Mammary epithelial cell (primary cell): ENCODE measurements at regions of chr2 and their contacts with region 1.

Region 1: GRCh38 chr2:71130113-71130904 is at the starts of genes MCEE and MPHOSPH10:
- DNase-seq: peak; percentile 92
- H3K4me3 ChIP-seq: peak within 1 kb of the TSS; percentile 91 to 98 (median 91)
- H3K27ac ChIP-seq: peak within 1 kb of the TSS; percentile 71
- H3K4me1 ChIP-seq: peaks cover 4% of the 10 kb centered on the region
- H3K27me3 ChIP-seq: no peaks in the 10 kb centered on the region
- CTCF ChIP-seq: no peak
- total RNA-seq, gene MCEE: 7.0 to 9.3 TPM
- total RNA-seq, gene MPHOSPH10: 10.5 to 28.1 TPM

Region 2: DNA sequence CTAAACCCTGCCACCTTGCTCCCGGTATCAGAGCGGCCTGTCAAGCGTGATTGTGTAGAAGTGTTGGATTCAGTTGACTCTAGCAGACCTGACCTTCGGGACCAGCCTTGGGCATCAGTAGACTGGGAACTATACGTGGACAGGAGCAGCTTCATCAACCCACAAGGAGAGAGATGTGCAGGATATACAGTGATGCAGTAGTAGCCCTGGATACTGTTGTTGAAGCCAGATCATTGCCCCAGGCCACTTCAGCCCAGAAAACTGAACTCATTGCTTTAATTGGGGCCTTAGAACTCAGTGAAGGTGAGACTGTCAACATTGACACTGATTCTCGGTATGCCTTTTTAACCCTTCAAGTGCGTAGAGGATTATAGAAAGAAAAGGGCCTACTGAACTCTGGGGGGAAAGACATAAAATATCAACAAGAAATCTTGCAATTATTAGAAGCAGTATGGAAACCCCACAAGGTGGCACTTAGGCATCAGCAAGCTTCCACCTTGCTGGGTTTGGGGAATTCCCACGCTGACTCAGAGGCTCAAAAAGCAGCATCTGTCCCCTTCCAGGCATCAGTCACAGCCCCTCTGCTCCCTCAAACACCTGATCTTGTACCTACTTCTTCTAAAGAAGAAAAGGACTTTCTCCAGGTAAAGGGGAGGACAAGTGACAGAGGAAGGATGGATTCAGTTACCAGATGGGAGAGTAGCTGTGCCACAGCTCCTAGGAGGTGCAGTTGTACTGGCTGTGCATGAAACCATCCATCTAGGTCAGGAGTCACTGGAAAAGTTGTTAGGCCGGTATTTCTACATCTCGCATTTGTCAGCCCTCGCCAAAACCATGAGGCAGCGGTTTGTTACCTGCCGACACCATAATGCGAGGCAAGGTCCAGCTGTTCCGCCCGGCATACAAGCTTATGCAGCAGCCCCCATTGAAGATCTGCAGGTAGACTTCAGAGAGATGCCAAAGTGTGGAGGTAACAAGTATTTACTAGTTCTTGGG is 80.6 kb before region 1 on chr2:
- CTCF ChIA-PET with region 1: no interaction called
- dilution Hi-C with region 1: no loop called
- in situ Hi-C with region 1: no loop called
- intact Hi-C with region 1: loop called (anchors 1 kb)
- DNase-seq: peak; percentile 77
- H3K4me3 ChIP-seq: no peak overlapping the region
- H3K27ac ChIP-seq: no peak overlapping the region
- H3K4me1 ChIP-seq: peaks cover 6% of the 10 kb centered on the region
- H3K27me3 ChIP-seq: no peaks in the 10 kb centered on the region
- CTCF ChIP-seq: peak; percentile 20 to 56